ENCODE measurements at regions of chr22 and their contacts with region 1.

Region 1: DNA sequence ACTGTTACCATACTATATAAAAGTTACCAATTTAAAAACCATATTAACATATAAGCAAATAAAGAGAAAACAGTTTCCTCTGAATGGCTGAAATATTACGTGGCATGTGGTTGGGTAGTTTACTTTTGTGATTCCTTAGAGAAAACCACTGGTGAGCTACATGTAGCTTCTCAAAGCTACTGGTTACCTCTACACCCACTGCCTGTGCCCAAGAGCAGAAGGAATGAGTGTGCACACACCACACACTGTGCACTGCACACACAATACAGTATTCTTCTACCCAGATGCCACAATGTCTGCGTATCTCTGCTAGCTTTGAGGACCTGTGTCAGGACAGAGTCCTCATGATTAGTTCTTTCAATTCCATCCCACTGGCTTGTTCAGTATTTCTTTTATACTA is 25.5 kb upstream of the YPEL1 start:
- DNase-seq: no peak
- H3K4me3 ChIP-seq: no peak overlapping the region
- H3K27ac ChIP-seq: no peak overlapping the region
- H3K4me1 ChIP-seq: no peaks in the 10 kb centered on the region
- H3K27me3 ChIP-seq: no peaks in the 10 kb centered on the region
- CTCF ChIP-seq: no peak

Region 2: GRCh38 chr22:21606775-21607174 is 154.3 kb before region 1 on chr22:
- CTCF ChIA-PET with region 1: no interaction called
- dilution Hi-C with region 1: no loop called
- in situ Hi-C with region 1: no loop called
- intact Hi-C with region 1: no loop called
- DNase-seq: no peak
- H3K4me3 ChIP-seq: no peak overlapping the region
- H3K27ac ChIP-seq: no peak overlapping the region
- H3K4me1 ChIP-seq: no peaks in the 10 kb centered on the region
- H3K27me3 ChIP-seq: no peaks in the 10 kb centered on the region
- CTCF ChIP-seq: no peak

Region 3: GRCh38 chr22:21790359-21790758 is 29.3 kb after region 1 on chr22:
- CTCF ChIA-PET with region 1: no interaction called
- dilution Hi-C with region 1: no loop called
- in situ Hi-C with region 1: no loop called
- intact Hi-C with region 1: no loop called
- DNase-seq: no peak
- H3K4me3 ChIP-seq: no peak overlapping the region
- H3K27ac ChIP-seq: no peak overlapping the region
- H3K4me1 ChIP-seq: peaks cover 15% of the 10 kb centered on the region
- H3K27me3 ChIP-seq: no peaks in the 10 kb centered on the region
- CTCF ChIP-seq: no peak

Region 4: GRCh38 chr22:21867528-21868266 is 106.6 kb after region 1 on chr22 and contains the start of gene MAPK1:
- CTCF ChIA-PET with region 1: no interaction called
- dilution Hi-C with region 1: no loop called
- in situ Hi-C with region 1: no loop called
- intact Hi-C with region 1: no loop called
- DNase-seq: peak; percentile 83
- H3K4me3 ChIP-seq: peak within 1 kb of the TSS; percentile 81 to 99 (median 88)
- H3K27ac ChIP-seq: peak within 1 kb of the TSS; percentile 86
- H3K4me1 ChIP-seq: peaks cover 25% of the 10 kb centered on the region
- H3K27me3 ChIP-seq: no peaks in the 10 kb centered on the region
- CTCF ChIP-seq: peak in 1 of 2 donors; percentile 38
- total RNA-seq, gene MAPK1: 106 to 147 TPM

Region 5: DNA sequence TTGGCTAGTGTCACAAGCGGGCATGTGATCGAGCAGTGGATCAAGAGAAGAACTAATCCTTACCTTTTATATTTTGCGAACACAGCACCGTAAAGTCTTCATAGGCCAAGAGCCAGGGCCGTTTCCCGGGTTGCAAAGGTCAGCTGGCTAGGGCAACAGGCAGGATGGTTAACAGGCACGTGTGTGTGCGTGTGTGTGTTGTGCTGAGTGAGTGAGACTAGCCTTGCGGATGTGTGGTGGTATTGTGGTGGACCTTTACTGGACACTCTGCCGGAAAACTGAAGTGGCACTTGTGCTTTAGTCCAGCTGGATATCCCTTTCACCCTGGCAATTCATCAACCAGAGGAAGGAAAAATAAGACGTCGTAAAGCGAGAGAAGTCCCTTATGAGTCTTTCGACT is 1596.0 kb after region 1 on chr22:
- CTCF ChIA-PET with region 1: interaction called, 14 read pairs
- dilution Hi-C with region 1: no loop called
- in situ Hi-C with region 1: no loop called
- intact Hi-C with region 1: no loop called
- DNase-seq: no peak
- H3K4me3 ChIP-seq: no peak overlapping the region
- H3K27ac ChIP-seq: no peak overlapping the region
- H3K4me1 ChIP-seq: no peaks in the 10 kb centered on the region
- H3K27me3 ChIP-seq: no peaks in the 10 kb centered on the region
- CTCF ChIP-seq: no peak